ENCODE measurements at regions of chr3 and their contacts with region 1.

Region 1: GRCh38 chr3:38346587-38347410 is at the start of gene XYLB:
- DNase-seq: peak; percentile 72
- ATAC-seq: peak; percentile 99
- H3K4me3 ChIP-seq: peak within 1 kb of the TSS; percentile 83
- H3K27ac ChIP-seq: peak within 1 kb of the TSS; percentile 30; the same call in 1 of the 2 replicates
- H3K4me1 ChIP-seq: no peaks in the 10 kb centered on the region
- H3K27me3 ChIP-seq: no peaks in the 10 kb centered on the region
- CTCF ChIP-seq: peak; percentile 85
- POLR2A ChIP-seq: no peak
- RAD21 ChIP-seq: peak; percentile 59
- total RNA-seq, gene XYLB: 2.5 and 3.0 TPM in 2 replicates

Region 2: GRCh38 chr3:38117748-38118420 is 228.9 kb before region 1 on chr3:
- CTCF ChIA-PET with region 1: interaction called, 6 read pairs
- POLR2A ChIA-PET with region 1: no interaction called
- dilution Hi-C with region 1: no loop called
- in situ Hi-C with region 1: loop called (anchors 10 kb)
- intact Hi-C with region 1: loop called (anchors 2 kb)
- DNase-seq: peak; percentile 55
- ATAC-seq: peak; percentile 81
- H3K4me3 ChIP-seq: no peak overlapping the region
- H3K27ac ChIP-seq: no peak overlapping the region
- H3K4me1 ChIP-seq: no peaks in the 10 kb centered on the region
- H3K27me3 ChIP-seq: peaks cover 8% of the 10 kb centered on the region
- CTCF ChIP-seq: peak; percentile 69
- POLR2A ChIP-seq: no peak
- RAD21 ChIP-seq: peak; percentile 84

Region 3: GRCh38 chr3:38136777-38137614 is 209.8 kb before region 1 on chr3 and contains the start of gene ACAA1:
- CTCF ChIA-PET with region 1: no interaction called
- POLR2A ChIA-PET with region 1: no interaction called
- dilution Hi-C with region 1: no loop called
- in situ Hi-C with region 1: no loop called
- intact Hi-C with region 1: loop called (anchors 1 kb)
- DNase-seq: peak; percentile 98
- ATAC-seq: peak; percentile 95
- H3K4me3 ChIP-seq: peak within 1 kb of the TSS; percentile 65
- H3K27ac ChIP-seq: peak within 1 kb of the TSS; percentile 78
- H3K4me1 ChIP-seq: peaks cover 13% of the 10 kb centered on the region
- H3K27me3 ChIP-seq: no peaks in the 10 kb centered on the region
- CTCF ChIP-seq: no peak
- POLR2A ChIP-seq: peak; percentile 84
- RAD21 ChIP-seq: peak; percentile 14; the same call in 1 of the 2 replicates
- total RNA-seq, gene ACAA1: 19.4 and 30.8 TPM in 2 replicates

Region 4: DNA sequence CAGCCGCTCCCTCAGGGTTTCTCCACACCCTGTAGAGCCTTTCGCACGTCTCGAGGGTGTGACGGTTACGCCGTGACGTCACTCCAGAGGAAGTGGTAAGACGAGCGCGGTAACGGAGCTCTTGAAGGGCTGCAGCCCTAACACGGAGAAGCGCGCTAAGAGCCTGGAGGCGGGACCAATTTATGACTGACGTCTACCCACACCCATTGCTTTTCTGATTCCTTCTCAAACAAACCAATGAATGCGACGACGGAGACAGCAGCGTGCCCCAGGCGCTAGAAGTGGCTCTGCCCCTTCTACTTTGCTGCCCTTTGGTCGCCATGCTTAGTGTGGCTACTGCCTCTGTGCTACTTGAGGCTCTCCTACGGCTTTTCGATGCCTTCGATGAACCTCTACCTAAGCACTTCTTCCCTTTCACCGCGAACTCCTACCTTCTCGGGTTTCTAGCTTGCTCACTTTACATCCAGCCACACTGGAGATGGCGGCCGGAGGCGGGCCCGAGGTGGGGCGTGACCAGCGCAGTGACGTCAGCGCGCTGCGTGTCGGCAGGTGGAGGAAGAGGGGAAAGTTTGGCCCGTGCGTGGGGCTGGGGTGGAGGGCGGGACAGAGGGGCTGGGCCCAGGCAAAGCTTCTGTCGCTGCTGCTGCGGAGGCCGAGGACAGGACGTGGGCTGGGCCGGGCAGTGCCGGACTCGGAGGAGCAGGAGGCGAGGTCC is 181.7 kb before region 1 on chr3 and contains the start of gene OXSR1:
- CTCF ChIA-PET with region 1: no interaction called
- POLR2A ChIA-PET with region 1: no interaction called
- dilution Hi-C with region 1: no loop called
- in situ Hi-C with region 1: no loop called
- intact Hi-C with region 1: no loop called
- DNase-seq: peak; percentile 100
- ATAC-seq: peak; percentile 91
- H3K4me3 ChIP-seq: peak within 1 kb of the TSS; percentile 57
- H3K27ac ChIP-seq: peak within 1 kb of the TSS; percentile 98
- H3K4me1 ChIP-seq: peaks cover 3% of the 10 kb centered on the region; the same call in 1 of the 2 replicates
- H3K27me3 ChIP-seq: no peaks in the 10 kb centered on the region
- CTCF ChIP-seq: no peak
- POLR2A ChIP-seq: peak; percentile 55; the same call in 1 of the 2 replicates
- RAD21 ChIP-seq: no peak; the same call in 1 of the 2 replicates
- total RNA-seq, gene OXSR1: 37.6 and 50.5 TPM in 2 replicates

Region 5: DNA sequence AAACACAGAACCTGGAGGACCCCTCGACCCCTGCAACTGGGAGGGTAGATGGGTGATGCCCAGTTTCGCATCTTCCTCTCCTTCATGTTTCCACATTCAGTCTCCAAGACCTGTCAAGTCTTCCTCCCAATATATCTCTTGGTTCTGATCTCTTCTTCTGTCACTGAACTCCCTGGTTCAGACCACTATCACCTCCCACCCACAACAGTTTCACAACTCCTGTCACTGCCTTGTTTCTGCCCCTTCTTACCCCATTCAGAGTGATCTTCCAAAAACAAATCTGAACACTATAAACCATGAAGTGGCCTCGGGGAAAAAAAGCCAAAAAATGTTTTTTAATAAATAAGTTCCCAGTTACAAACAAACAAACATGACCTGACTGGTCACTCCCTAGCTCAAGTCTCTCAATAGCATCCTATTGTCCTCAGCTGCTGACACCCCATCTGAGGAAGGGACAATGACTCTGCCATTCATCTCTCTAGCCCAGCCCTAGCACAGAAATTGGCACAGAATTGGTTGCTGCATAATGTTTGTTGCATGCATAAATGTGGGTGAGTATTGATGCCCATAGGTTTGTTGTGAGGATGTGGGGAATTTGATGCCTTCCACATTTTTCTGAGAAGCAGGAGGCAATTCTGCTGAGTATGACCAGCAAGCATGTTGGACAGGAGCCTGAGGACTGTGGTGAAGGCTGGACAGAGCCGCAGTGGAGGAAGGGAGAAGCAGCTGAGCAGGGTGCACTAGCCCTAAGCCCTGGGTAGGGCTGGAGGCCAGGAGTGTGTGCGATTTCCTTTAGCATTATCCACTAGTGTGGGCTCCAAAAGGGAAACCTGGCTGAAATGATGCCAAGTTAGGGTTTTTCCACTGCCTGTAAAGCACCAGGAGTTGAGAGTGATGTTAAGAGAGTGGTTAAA is 12.4 kb before region 1 on chr3:
- CTCF ChIA-PET with region 1: interaction called, 10 read pairs
- POLR2A ChIA-PET with region 1: interaction called, 11 read pairs
- dilution Hi-C with region 1: no loop called
- in situ Hi-C with region 1: no loop called
- intact Hi-C with region 1: no loop called
- DNase-seq: peak; percentile 60
- ATAC-seq: peak; percentile 97
- H3K4me3 ChIP-seq: no peak overlapping the region
- H3K27ac ChIP-seq: no peak overlapping the region
- H3K4me1 ChIP-seq: peaks cover 1% of the 10 kb centered on the region; the same call in 1 of the 2 replicates
- H3K27me3 ChIP-seq: peaks cover 4% of the 10 kb centered on the region
- CTCF ChIP-seq: no peak
- POLR2A ChIP-seq: no peak
- RAD21 ChIP-seq: no peak

Region 6: DNA sequence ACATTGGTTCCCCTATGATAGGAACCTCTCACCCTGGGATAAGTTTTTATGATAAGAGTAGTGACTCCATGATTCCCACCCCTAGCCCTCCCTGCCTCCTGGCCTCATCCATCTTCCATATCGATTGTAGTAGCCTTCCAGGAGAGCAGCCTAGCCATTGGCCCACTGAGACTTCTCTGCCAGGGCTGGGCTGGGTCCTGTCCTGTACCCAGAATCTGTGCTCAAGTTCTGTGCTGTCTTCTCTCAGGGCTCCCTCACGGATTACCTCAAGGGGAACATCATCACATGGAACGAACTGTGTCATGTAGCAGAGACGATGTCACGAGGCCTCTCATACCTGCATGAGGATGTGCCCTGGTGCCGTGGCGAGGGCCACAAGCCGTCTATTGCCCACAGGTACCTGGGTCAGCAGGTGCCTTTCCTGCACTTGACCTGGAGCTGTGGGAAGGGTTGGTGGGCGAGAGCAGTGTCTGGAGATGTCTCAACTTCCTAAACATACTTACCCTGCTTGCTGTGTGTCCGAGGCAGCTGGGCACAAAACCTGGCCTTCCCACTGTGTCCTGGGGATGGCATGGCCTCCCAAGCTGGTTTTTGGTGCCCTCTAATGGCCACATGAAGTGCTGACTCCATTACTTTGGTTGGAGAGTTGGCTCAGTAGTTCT is 132.8 kb after region 1 on chr3:
- CTCF ChIA-PET with region 1: interaction called, 20 read pairs
- POLR2A ChIA-PET with region 1: no interaction called
- dilution Hi-C with region 1: loop called (anchors 25 kb)
- in situ Hi-C with region 1: loop called (anchors 5 kb)
- intact Hi-C with region 1: loop called (anchors 1 kb)
- DNase-seq: peak; percentile 62
- ATAC-seq: peak; percentile 99
- H3K4me3 ChIP-seq: no peak overlapping the region
- H3K27ac ChIP-seq: no peak overlapping the region
- H3K4me1 ChIP-seq: no peaks in the 10 kb centered on the region
- H3K27me3 ChIP-seq: no peaks in the 10 kb centered on the region
- CTCF ChIP-seq: peak; percentile 92
- POLR2A ChIP-seq: peak; percentile 43; the same call in 1 of the 2 replicates
- RAD21 ChIP-seq: peak; percentile 95